CD4-positive, alpha-beta memory T cell (primary cell): ENCODE measurements at regions of chr6 and their contacts with region 1.

Region 1: GRCh38 chr6:42771741-42772100 is 10.1 kb upstream of the BICRAL start:
- DNase-seq: peak in 4 of 5 donors; percentile 75 to 79 (median 77)
- H3K4me3 ChIP-seq: peak overlapping the region; percentile 7 to 11
- H3K4me3 Mint-ChIP-seq: peak overlapping the region; percentile 72 to 90 (median 84)
- H3K27ac ChIP-seq: peak overlapping the region; percentile 89
- H3K27ac Mint-ChIP-seq: peak overlapping the region; percentile 97 to 100 (median 100)
- H3K4me1 ChIP-seq: peaks cover 77% of the 10 kb centered on the region
- H3K4me1 Mint-ChIP-seq: peaks cover 54 to 88% (median 70%) of the 10 kb centered on the region in 4 donors
- H3K27me3 ChIP-seq: no peaks in the 10 kb centered on the region
- H3K27me3 Mint-ChIP-seq: no peaks in the 10 kb centered on the region

Region 2: DNA sequence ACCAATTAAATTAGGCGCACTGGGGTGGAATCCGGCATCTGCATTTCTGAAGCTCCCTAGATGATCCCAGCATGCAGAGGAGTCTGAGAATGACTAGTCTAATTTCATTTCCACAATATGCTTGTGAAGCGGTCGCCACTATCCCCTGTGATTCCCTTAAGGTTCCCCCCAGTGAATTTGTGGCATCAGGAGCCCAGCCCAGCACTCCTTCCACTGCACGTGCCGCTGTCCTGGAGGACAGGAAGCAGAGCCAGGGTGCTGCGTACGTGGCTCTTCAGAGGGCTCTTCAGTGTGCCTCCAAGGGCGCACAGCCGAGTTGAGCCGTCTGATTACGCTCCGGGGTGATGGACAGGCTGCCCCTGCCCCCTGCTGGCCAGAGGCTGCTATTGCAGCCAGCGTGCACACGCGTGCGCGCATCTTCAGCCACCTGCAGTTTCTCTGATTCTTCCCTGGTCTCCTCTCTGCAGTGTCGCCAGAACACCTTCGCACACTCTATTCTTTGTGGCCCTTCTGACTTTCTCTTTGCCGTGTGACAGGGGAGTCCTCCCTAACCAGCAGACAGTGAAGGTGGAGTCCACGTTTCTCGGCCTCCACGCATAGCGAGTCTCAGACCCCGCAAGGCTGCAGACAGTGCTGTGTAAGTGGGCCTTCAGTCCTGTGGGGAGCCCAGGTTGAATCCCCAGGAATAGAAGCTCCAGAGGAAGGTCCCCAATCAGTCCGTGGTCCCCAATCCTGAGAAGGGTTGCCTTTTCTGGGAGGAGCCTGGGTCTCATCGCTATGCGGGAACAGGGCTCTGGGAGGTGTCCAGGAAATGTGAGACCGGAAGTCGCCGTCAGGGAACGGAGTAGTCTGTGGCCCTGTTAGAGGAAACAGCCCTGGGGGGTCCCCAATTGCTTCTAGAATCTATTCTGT is 1452.8 kb before region 1 on chr6:
- CTCF ChIA-PET with region 1: no interaction called
- POLR2A ChIA-PET with region 1: no interaction called
- intact Hi-C with region 1: no loop called
- DNase-seq: peak; percentile 76 to 82 (median 81)
- H3K4me3 ChIP-seq: peak overlapping the region in 1 of 2 donors; percentile 8
- H3K4me3 Mint-ChIP-seq: peak overlapping the region in 7 of 8 donors; percentile 12 to 72 (median 67)
- H3K27ac ChIP-seq: no peak overlapping the region
- H3K27ac Mint-ChIP-seq: peak overlapping the region in 3 of 7 donors; percentile 27 to 87 (median 71)
- H3K4me1 ChIP-seq: peaks cover 7% of the 10 kb centered on the region
- H3K4me1 Mint-ChIP-seq: peaks cover 2 to 19% (median 10%) of the 10 kb centered on the region in 4 donors
- H3K27me3 ChIP-seq: no peaks in the 10 kb centered on the region
- H3K27me3 Mint-ChIP-seq: peaks cover 5 to 14% of the 10 kb centered on the region in 2 donors

Region 3: DNA sequence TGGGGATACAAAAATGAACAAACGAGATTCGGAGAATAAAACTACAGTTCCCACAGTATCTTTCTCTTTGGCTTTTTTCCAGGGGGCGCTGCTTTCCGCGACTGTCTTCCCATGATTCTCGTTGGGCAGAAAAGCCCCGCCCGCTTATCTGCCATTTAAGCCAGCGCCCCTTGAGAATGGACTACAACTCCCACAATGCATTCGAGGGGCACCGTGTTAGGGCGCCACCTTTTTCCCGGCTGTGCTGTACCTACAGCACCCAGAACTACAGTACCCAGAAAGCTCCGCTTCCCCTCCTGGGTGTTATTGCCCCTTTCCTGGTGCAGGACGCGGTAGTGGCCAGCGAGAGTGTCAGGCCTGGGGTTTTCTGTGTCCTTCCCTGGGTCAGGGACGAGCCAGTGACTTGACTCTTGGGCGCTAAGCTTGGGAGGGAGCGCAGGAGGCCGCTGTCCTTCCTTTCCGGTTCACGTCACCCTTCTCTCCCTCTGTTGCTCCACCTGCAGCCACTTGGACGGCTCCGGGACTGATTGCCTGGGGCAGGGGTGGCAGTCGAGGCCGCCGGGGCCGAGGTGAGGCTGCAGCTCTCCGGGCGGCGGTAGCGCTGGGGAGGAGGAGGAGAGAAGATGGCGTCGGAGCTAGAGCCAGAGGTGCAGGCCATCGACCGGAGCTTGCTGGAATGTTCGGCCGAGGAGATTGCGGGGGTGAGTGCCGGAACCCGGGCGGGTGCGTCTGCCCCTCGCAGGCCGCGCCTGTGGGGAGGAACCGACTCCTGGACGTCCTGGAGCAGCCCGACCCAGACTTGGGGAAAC is 207.8 kb before region 1 on chr6 and contains the start of gene UBR2:
- CTCF ChIA-PET with region 1: no interaction called
- POLR2A ChIA-PET with region 1: interaction called, 13 read pairs
- intact Hi-C with region 1: no loop called
- DNase-seq: peak; percentile 92 to 98 (median 95)
- H3K4me3 ChIP-seq: peak within 1 kb of the TSS; percentile 98 to 100
- H3K4me3 Mint-ChIP-seq: peak within 1 kb of the TSS; percentile 92 to 100 (median 98)
- H3K27ac ChIP-seq: peak within 1 kb of the TSS; percentile 94
- H3K27ac Mint-ChIP-seq: peak within 1 kb of the TSS; percentile 90 to 98 (median 96)
- H3K4me1 ChIP-seq: peaks cover 33% of the 10 kb centered on the region
- H3K4me1 Mint-ChIP-seq: peaks cover 21 to 43% (median 28%) of the 10 kb centered on the region in 4 donors
- H3K27me3 ChIP-seq: no peaks in the 10 kb centered on the region
- H3K27me3 Mint-ChIP-seq: peaks cover 0 to 1% of the 10 kb centered on the region in 2 donors
- total RNA-seq, gene UBR2: 55.0 to 55.7 TPM

Region 4: DNA sequence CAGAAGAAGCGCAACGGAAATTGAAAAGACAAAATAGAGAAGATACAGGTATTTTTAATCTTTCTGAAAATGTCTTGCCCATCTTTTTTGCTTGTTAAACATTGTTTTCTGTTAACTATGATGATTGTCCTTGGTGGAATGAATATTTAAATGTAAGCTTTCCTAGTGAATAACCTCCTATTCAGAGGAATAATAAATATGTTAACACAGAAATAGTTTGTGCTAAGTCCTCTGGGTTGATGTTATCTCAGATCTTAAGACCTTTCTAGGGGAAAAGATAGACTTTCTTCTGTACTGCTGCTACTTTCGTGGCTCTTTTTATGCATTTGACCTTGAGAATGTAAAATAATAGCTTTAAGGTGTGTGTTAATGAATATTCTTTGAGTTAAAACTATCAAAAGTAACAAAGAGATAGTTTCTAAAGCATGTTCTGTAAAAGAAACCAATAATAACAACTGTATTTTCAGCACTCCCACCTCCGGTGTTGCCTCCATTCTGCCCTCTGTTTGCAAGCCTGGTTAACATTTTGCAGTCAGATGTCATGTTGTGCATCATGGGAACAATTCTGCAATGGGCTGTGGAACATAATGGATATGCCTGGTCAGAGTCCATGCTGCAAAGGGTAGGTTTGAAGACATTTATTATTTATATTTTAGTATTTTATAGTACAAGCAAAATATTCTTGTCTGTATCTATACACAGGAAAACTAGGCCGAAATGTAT is 119.5 kb before region 1 on chr6:
- CTCF ChIA-PET with region 1: no interaction called
- POLR2A ChIA-PET with region 1: no interaction called
- intact Hi-C with region 1: no loop called
- DNase-seq: no peak
- H3K4me3 ChIP-seq: no peak overlapping the region
- H3K4me3 Mint-ChIP-seq: no peak overlapping the region
- H3K27ac ChIP-seq: no peak overlapping the region
- H3K27ac Mint-ChIP-seq: no peak overlapping the region
- H3K4me1 ChIP-seq: no peaks in the 10 kb centered on the region
- H3K4me1 Mint-ChIP-seq: no peaks in the 10 kb centered on the region
- H3K27me3 ChIP-seq: no peaks in the 10 kb centered on the region
- H3K27me3 Mint-ChIP-seq: no peaks in the 10 kb centered on the region

Region 5: GRCh38 chr6:42726485-42727086 is 45.1 kb before region 1 on chr6:
- CTCF ChIA-PET with region 1: interaction called, 9 read pairs
- POLR2A ChIA-PET with region 1: interaction called, 64 read pairs
- intact Hi-C with region 1: loop called (anchors 1 kb)
- DNase-seq: peak; percentile 79 to 89 (median 81)
- H3K4me3 ChIP-seq: peak overlapping the region; percentile 53 to 55
- H3K4me3 Mint-ChIP-seq: peak overlapping the region; percentile 83 to 98 (median 92)
- H3K27ac ChIP-seq: peak overlapping the region; percentile 69
- H3K27ac Mint-ChIP-seq: peak overlapping the region; percentile 86 to 99 (median 98)
- H3K4me1 ChIP-seq: peaks cover 16% of the 10 kb centered on the region
- H3K4me1 Mint-ChIP-seq: peaks cover 11 to 24% (median 18%) of the 10 kb centered on the region in 4 donors
- H3K27me3 ChIP-seq: no peaks in the 10 kb centered on the region
- H3K27me3 Mint-ChIP-seq: no peaks in the 10 kb centered on the region

Region 6: DNA sequence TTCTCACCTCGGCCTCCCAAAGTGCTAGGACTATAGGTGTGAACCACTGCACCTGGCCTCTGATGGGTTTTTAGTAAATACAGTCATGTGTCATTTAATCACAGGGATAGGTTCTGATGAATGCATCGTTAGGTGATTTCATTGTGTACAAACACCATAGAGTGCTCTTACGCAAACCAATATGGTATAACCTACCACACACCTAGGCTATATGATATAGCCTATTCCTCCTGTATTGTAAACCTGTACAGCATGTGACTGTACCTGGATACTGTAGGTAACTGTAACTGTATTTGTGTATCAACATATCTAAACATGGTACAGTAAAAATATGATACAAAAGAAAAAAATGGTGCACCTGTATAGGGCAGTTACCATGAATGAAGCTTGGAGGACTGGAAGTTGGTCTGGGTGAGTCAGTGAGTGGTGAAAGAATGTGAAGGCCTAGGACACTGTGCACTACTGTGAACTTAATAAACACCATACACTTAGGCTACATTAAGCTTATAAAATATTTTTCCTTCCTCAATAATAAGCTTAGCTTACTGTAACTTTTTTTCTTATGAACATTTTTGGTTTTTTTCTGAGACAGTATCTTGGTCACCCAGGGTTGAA is 20.1 kb after region 1 on chr6:
- CTCF ChIA-PET with region 1: interaction called, 5 read pairs
- POLR2A ChIA-PET with region 1: interaction called, 802 read pairs
- intact Hi-C with region 1: no loop called
- DNase-seq: no peak
- H3K4me3 ChIP-seq: no peak overlapping the region
- H3K4me3 Mint-ChIP-seq: no peak overlapping the region
- H3K27ac ChIP-seq: no peak overlapping the region
- H3K27ac Mint-ChIP-seq: peak overlapping the region in 6 of 7 donors; percentile 30 to 80 (median 64)
- H3K4me1 ChIP-seq: peaks cover 52% of the 10 kb centered on the region
- H3K4me1 Mint-ChIP-seq: peaks cover 9 to 38% (median 35%) of the 10 kb centered on the region in 4 donors
- H3K27me3 ChIP-seq: no peaks in the 10 kb centered on the region
- H3K27me3 Mint-ChIP-seq: no peaks in the 10 kb centered on the region

Region 7: GRCh38 chr6:42890311-42891198 is 118.8 kb after region 1 on chr6:
- CTCF ChIA-PET with region 1: no interaction called
- POLR2A ChIA-PET with region 1: interaction called, 29 read pairs
- intact Hi-C with region 1: no loop called
- DNase-seq: peak; percentile 87 to 91 (median 89)
- H3K4me3 ChIP-seq: peak overlapping the region; percentile 59 to 97
- H3K4me3 Mint-ChIP-seq: peak overlapping the region; percentile 94 to 99 (median 98)
- H3K27ac ChIP-seq: peak overlapping the region; percentile 92
- H3K27ac Mint-ChIP-seq: peak overlapping the region; percentile 93 to 99 (median 97)
- H3K4me1 ChIP-seq: peaks cover 15% of the 10 kb centered on the region
- H3K4me1 Mint-ChIP-seq: peaks cover 9 to 21% (median 12%) of the 10 kb centered on the region in 4 donors
- H3K27me3 ChIP-seq: no peaks in the 10 kb centered on the region
- H3K27me3 Mint-ChIP-seq: no peaks in the 10 kb centered on the region

Region 8: GRCh38 chr6:44012078-44012493 is 1240.4 kb after region 1 on chr6:
- CTCF ChIA-PET with region 1: no interaction called
- POLR2A ChIA-PET with region 1: no interaction called
- intact Hi-C with region 1: no loop called
- DNase-seq: no peak
- H3K4me3 ChIP-seq: no peak overlapping the region
- H3K4me3 Mint-ChIP-seq: no peak overlapping the region
- H3K27ac ChIP-seq: no peak overlapping the region
- H3K27ac Mint-ChIP-seq: no peak overlapping the region
- H3K4me1 ChIP-seq: no peaks in the 10 kb centered on the region
- H3K4me1 Mint-ChIP-seq: no peaks in the 10 kb centered on the region
- H3K27me3 ChIP-seq: no peaks in the 10 kb centered on the region
- H3K27me3 Mint-ChIP-seq: peaks cover 7 to 10% of the 10 kb centered on the region in 2 donors